ENCODE measurements at regions of chr12 and their contacts with region 1.

Region 1: DNA sequence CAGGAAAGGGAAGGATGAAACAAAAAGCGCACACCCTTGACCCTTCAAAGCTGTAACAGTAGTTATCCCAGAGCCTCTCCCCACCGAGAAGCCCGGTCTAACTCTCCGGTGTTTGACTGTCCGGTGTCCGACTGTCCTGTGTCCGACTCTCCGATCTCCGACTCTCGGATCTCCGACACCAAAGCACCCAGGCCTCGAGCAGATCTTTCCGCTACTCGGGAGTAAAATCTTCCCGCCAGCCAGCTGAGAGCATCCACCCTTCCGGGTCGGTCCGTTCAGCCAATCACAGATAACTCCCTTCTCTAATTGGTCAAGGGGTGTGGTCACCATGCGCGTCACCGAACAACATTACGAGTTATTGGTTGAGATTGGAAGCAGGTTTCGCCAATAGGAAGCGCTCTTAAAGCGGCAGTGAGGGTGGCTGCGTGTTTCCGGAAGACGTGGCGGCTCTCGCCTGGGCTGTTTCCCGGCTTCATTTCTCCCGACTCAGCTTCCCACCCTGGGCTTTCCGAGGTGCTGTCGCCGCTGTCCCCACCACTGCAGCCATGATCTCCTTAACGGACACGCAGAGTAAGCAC is at the starts of genes GOLT1B and RECQL:
- DNase-seq: peak; percentile 96
- H3K4me3 Mint-ChIP-seq: no peak within 1 kb of the TSS
- H3K27ac Mint-ChIP-seq: no peak within 1 kb of the TSS
- H3K4me1 Mint-ChIP-seq: peaks cover 56% of the 10 kb centered on the region
- H3K27me3 Mint-ChIP-seq: no peaks in the 10 kb centered on the region
- total RNA-seq, gene GOLT1B: 40.7 to 45.6 TPM
- total RNA-seq, gene RECQL: 88.3 to 95.8 TPM

Region 2: GRCh38 chr12:21486000-21486399 is 15.5 kb before region 1 on chr12:
- CTCF ChIA-PET with region 1: interaction called, 11 read pairs
- POLR2A ChIA-PET with region 1: interaction called, 3 read pairs
- DNase-seq: no peak
- H3K4me3 Mint-ChIP-seq: no peak overlapping the region
- H3K27ac Mint-ChIP-seq: no peak overlapping the region
- H3K4me1 Mint-ChIP-seq: peaks cover 7% of the 10 kb centered on the region
- H3K27me3 Mint-ChIP-seq: no peaks in the 10 kb centered on the region

Measured in activated CD4-positive, alpha-beta T cell treated with anti-CD3 and anti-CD28 coated beads, Interleukin-2, amount 10 ng/mL, durations not matched to agents 7 days and 5 days (primary cell).